Tibial artery (tissue), 4 donors: ENCODE measurements at regions of chr4 and their contacts with region 1.

Region 1: DNA sequence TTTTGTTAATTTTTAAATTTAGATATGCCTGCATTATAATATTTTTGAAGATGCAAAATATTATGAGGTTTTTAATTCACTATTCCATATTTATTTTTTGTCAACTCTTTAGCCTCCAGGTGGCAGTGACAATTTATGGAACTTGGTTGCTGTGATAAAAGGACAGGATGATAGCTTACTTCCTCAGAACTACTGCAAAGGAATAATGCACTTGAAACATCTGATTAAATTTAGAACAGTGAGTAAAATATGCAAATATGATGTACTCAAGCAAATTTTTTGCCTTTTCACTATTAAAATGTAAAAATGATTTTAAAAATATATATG is 45.1 kb downstream of the SPATA4 start:
- DNase-seq: no peak
- H3K4me3 ChIP-seq: no peak overlapping the region
- H3K27ac ChIP-seq: no peak overlapping the region
- H3K4me1 ChIP-seq: no peaks in the 10 kb centered on the region
- H3K27me3 ChIP-seq: no peaks in the 10 kb centered on the region
- CTCF ChIP-seq: peak; percentile 39 to 50

Region 2: DNA sequence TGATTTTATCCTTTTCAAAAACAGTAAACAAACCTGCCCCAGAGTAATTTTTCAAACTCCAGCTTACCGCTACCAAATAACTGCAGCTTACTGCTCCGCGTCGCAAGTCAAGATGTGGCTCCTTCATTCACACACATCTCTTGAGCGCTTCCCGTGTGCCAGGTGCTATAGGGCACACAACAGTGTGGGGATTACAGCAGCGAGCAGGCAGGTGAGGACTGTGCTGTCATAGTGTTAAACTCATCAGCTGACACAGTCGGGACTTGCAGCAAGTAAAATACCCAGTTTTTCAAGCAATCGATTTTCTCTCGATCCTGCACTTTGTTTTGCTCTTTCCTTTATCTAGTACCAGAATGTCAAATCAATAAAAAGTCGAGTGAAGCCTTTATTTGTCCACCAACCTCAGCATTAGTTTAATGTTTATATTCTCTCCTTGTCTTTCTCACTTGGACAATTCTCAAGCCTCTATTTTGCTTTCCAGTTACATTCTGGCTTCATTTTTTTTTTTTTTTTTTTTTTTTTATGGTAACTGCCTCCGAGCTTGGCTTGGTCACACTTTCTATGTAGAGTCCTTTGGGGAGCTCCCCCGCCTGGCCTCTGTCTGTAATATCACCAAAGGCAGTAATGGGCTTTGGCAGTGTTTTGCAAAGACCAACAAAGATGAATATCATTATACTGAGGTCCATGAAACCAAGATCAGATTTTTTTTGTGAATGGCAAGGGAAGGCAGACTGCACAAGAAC is 127.0 kb after region 1 on chr4:
- intact Hi-C with region 1: loop called (anchors 5 kb)
- DNase-seq: peak; percentile 54 to 77
- H3K4me3 ChIP-seq: peak overlapping the region in 1 of 2 donors; percentile 18
- H3K27ac ChIP-seq: peak overlapping the region in 1 of 2 donors; percentile 25
- H3K4me1 ChIP-seq: peaks cover 0 to 24% (median 0%) of the 10 kb centered on the region in 4 donors
- H3K27me3 ChIP-seq: no peaks in the 10 kb centered on the region
- CTCF ChIP-seq: peak; percentile 45 to 49

Region 3: DNA sequence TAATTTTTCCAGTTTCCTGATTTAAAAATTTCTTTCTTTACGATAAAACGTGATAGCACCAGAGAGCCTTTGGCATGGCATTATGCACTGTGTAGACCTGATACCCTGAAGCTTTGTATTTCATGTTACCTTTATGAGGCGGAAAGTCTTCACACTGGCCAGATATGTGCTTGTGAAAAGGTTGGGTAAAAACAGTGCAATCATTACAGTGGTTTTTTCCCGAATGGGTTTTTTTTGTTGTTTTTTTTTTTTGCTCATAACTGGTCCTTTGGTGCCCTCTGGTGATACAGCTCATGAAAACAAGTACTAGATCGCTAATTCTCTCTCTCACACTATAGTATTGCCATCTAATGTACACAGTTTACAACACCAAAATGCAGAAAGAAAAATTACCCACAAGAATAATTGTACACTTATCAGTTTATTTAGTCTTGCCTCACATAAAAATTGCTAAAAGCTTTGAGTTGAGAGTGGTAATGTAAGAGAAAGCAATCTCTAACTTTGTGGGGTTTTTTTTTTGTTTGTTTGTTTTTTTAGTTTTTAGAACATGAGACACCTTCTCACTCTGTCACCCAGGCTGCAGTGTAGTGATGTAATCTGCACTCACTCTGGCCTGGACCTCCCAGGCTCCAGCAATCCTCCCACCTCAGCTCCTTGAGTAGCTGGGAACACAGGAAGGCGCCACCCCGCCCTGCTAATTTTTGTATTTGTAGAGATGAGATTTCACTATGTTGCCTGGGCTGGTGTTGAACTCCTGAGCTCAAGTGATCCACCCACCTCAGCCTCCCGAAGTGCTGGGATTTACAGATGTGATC is 190.8 kb after region 1 on chr4:
- intact Hi-C with region 1: loop called (anchors 5 kb)
- DNase-seq: no peak
- H3K4me3 ChIP-seq: no peak overlapping the region
- H3K27ac ChIP-seq: no peak overlapping the region
- H3K4me1 ChIP-seq: peaks cover 0 to 21% (median 0%) of the 10 kb centered on the region in 4 donors
- H3K27me3 ChIP-seq: no peaks in the 10 kb centered on the region
- CTCF ChIP-seq: peak; percentile 28 to 30

Region 4: GRCh38 chr4:176387571-176387970 is 237.3 kb after region 1 on chr4:
- intact Hi-C with region 1: no loop called
- DNase-seq: no peak
- H3K4me3 ChIP-seq: no peak overlapping the region
- H3K27ac ChIP-seq: no peak overlapping the region
- H3K4me1 ChIP-seq: no peaks in the 10 kb centered on the region
- H3K27me3 ChIP-seq: no peaks in the 10 kb centered on the region
- CTCF ChIP-seq: no peak